ENCODE measurements at regions of chr12 and their contacts with region 1.

Region 1: DNA sequence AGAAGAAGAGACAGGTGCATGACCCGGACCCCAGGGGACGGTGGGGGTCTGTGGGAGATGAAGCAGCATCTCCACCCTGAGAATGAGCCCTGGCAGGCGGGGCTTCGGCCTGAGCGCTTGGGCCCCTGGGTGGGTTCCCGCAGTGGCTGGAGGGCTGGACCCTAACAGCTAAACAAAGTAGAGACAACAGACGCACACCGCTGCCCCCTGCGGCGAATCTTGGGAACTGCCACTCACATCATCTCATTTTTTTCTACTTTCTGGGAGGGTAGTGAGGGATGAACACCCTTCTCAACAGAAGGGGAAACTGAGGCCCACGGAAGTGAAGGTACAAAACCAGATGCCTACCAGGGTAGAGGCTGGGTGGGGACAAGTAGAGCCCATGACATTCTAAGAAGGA is 104.7 kb downstream of the RFLNA start:
- DNase-seq: peak in 1 of 2 donors; percentile 82
- ATAC-seq: peak; percentile 26 to 50 (median 34)
- H3K4me3 ChIP-seq: no peak overlapping the region
- H3K27ac ChIP-seq: peak overlapping the region; percentile 60
- H3K4me1 ChIP-seq: peaks cover 54% of the 10 kb centered on the region
- H3K27me3 ChIP-seq: no peaks in the 10 kb centered on the region
- CTCF ChIP-seq: peak; percentile 62

Region 2: GRCh38 chr12:124327362-124328043 is 72.1 kb before region 1 on chr12:
- intact Hi-C with region 1: loop called in 1 of 2 experiments (anchors 2 kb)
- DNase-seq: peak in 1 of 2 donors; percentile 81
- ATAC-seq: peak; percentile 60 to 88 (median 82)
- H3K4me3 ChIP-seq: no peak overlapping the region
- H3K27ac ChIP-seq: peak overlapping the region; percentile 84
- H3K4me1 ChIP-seq: peaks cover 16% of the 10 kb centered on the region
- H3K27me3 ChIP-seq: no peaks in the 10 kb centered on the region
- CTCF ChIP-seq: no peak

Region 3: DNA sequence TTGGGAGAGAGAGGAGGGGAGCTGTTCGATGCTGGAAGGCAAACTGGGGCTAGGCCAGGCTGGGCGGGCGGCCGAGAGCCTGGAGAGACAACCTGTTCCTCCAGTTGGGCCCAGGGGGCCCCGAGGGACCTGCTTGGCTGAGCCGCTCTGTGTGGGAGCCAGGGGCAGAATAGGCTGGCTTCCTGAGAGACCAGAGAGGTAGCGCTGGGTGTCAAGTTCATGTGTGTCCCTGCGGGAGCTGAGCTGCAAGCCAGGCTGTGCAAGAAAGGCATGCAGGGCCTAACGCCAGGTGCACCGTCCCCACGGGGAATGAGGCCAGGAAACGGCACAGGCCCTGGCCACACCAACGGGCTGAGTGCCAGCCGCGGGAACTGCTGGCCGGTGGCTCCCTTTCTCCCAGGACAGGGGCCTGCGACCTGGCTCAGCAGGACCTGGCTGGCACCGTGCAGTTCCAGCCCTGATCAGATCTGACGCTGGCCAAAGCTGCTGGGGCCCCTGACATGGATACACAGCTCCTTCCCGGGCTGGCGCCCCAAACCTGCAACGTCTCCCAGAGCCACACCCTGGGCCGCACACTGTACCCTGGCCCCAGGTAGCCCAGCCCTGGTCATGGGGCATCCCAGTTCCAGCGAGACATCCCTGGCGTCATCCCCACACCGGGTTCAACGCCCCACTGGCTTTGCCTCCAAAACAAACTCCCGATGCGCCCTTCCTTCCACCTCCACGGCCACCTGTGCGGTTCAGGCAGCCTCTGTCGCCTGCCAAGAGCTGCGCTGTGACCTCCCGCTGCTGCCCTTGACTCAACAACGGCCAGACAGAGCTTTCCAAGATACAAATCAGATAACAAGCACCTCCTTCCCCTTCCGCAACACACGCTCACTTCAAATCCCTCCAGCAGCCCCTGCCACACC is 39.7 kb before region 1 on chr12:
- intact Hi-C with region 1: loop called in 1 of 2 experiments (anchors 5 kb)
- DNase-seq: peak; percentile 96 to 99
- ATAC-seq: peak; percentile 84 to 90 (median 88)
- H3K4me3 ChIP-seq: no peak overlapping the region
- H3K27ac ChIP-seq: peak overlapping the region; percentile 76
- H3K4me1 ChIP-seq: peaks cover 60% of the 10 kb centered on the region
- H3K27me3 ChIP-seq: no peaks in the 10 kb centered on the region
- CTCF ChIP-seq: no peak

Region 4: GRCh38 chr12:124441443-124442194 is 42.0 kb after region 1 on chr12:
- intact Hi-C with region 1: no loop called
- DNase-seq: no peak
- ATAC-seq: peak in 1 of 4 donors; percentile 30
- H3K4me3 ChIP-seq: no peak overlapping the region
- H3K27ac ChIP-seq: no peak overlapping the region
- H3K4me1 ChIP-seq: no peaks in the 10 kb centered on the region
- H3K27me3 ChIP-seq: no peaks in the 10 kb centered on the region
- CTCF ChIP-seq: no peak

Measured in psoas muscle (tissue), 8 donors.